Activated CD8-positive, alpha-beta T cell treated with anti-CD3 and anti-CD28 coated beads for 36 hours (primary cell): ENCODE measurements at regions of chr2 and their contacts with region 1.

Region 1: DNA sequence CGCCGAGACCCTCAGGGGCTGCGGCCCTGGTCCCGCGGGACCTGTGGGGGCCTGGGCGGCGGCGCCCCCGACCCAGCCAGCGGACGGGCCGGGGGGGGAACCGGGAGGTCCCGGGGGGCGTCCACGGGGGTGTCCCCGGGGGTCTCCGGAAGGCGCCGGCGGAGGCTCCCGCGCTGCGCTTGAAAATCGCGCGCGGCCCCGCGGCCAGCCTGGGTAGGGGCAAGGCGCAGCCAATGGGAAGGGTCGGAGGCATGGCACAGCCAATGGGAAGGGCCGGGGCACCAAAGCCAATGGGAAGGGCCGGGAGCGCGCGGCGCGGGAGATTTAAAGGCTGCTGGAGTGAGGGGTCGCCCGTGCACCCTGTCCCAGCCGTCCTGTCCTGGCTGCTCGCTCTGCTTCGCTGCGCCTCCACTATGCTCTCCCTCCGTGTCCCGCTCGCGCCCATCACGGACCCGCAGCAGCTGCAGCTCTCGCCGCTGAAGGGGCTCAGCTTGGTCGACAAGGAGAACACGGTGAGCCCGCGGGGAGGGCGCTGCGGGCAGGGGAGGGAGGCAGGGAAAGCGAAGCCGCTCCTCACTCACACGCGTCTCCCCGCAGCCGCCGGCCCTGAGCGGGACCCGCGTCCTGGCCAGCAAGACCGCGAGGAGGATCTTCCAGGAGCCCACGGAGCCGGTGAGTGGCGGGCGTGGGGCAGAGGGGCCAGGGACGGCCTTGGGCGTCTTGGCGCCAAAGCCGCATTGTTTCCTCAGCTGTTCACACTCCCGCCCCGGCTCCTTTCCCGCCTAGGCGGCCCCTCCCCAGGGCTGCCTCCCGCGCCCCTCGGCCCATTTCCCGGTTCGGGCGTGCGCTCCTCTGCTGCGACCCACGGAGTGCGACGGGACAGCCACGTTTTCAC is at the start of gene RRM2:
- DNase-seq: peak; percentile 98
- ATAC-seq: peak; percentile 80
- H3K4me3 Mint-ChIP-seq: peak within 1 kb of the TSS; percentile 94
- H3K27ac Mint-ChIP-seq: peak within 1 kb of the TSS; percentile 98
- H3K4me1 Mint-ChIP-seq: peaks cover 37% of the 10 kb centered on the region
- H3K27me3 Mint-ChIP-seq: peaks cover 2% of the 10 kb centered on the region
- CTCF ChIP-seq: no peak
- total RNA-seq, gene RRM2: 368 to 396 TPM

Region 2: GRCh38 chr2:9967053-9967775 is 155.4 kb before region 1 on chr2:
- CTCF ChIA-PET with region 1: no interaction called
- POLR2A ChIA-PET with region 1: no interaction called
- intact Hi-C with region 1: no loop called
- DNase-seq: no peak
- ATAC-seq: no peak
- H3K4me3 Mint-ChIP-seq: no peak overlapping the region
- H3K27ac Mint-ChIP-seq: no peak overlapping the region
- H3K4me1 Mint-ChIP-seq: peaks cover 6% of the 10 kb centered on the region
- H3K27me3 Mint-ChIP-seq: no peaks in the 10 kb centered on the region
- CTCF ChIP-seq: no peak

Region 3: DNA sequence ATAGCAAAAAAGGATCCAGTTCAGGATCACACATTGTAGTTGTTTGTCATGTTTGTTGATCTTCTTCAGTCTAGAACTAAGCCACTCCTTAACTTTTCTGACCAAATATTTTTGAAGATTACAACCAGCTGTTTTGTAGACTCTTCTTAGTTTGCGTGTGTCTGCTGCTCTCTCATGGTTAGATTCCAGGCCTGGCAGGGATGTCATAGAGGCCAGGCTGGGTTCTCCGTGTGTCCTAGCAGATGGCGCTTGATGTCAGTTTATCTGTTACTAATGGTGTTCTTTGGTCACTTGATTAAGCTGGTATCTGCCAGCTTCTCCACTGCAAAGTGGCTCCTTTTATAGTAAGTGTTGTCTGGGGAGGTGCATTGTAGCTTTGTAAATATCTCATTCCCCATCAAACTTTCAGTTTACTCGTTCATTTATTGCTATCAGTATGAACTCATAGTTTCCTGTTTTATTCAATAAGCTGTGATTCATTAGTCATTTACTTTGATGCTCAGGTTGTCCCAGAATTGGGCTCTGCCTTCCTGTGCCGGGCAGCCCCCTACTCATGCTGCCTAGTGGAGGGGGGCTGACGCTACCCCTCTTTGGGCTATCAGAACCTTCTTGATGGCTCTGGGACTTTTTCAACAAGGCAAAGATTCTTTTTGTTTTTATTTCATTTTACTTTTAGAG is 129.0 kb before region 1 on chr2:
- CTCF ChIA-PET with region 1: no interaction called
- POLR2A ChIA-PET with region 1: no interaction called
- intact Hi-C with region 1: no loop called
- DNase-seq: no peak
- ATAC-seq: no peak
- H3K4me3 Mint-ChIP-seq: no peak overlapping the region
- H3K27ac Mint-ChIP-seq: no peak overlapping the region
- H3K4me1 Mint-ChIP-seq: peaks cover 2% of the 10 kb centered on the region
- H3K27me3 Mint-ChIP-seq: peaks cover 1% of the 10 kb centered on the region
- CTCF ChIP-seq: no peak

Region 4: DNA sequence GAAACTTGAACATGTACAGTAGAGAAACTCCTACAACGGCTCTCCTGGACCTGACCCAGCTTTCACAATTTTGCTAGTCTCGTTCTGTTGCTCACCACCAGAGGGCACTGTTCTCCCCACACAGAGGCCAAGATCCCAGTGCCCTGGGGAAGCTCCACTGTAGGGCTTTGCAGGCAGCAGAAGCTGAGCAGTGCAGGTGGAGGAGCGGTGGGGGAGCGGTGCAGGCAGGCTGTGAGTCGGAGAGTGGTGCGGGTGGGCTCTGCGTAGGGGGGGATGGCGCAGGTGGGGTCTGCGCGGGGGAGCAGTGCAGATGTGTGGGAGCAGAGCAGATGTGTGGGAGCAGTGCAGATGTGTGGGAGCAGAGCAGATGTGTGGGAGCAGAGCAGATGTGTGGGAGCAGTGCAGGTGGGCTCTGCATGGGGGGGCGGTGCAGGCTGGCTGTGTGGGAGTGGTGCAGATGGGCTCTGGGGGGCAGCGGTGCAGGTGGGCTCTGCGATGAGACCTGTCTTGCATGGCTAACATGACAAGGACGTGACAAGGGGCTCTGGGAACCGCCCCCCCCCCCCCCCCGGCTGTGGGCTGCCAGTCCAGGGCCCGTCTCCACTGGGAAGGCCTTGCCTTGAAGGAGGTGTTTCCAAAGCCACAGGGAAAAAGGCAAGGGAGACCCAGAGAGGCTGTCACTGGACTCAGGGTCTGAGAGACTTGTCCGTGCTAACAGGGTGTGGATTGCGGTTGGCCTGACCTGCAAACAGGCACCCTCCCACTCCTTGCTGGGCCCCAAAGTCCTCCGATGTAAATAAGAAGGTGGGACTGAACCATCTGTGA is 49.8 kb before region 1 on chr2:
- CTCF ChIA-PET with region 1: interaction called, 34 read pairs
- POLR2A ChIA-PET with region 1: interaction called, 3 read pairs
- intact Hi-C with region 1: no loop called
- DNase-seq: peak; percentile 86
- ATAC-seq: peak; percentile 97
- H3K4me3 Mint-ChIP-seq: no peak overlapping the region
- H3K27ac Mint-ChIP-seq: no peak overlapping the region
- H3K4me1 Mint-ChIP-seq: peaks cover 8% of the 10 kb centered on the region
- H3K27me3 Mint-ChIP-seq: peaks cover 39% of the 10 kb centered on the region
- CTCF ChIP-seq: peak; percentile 86

Region 5: DNA sequence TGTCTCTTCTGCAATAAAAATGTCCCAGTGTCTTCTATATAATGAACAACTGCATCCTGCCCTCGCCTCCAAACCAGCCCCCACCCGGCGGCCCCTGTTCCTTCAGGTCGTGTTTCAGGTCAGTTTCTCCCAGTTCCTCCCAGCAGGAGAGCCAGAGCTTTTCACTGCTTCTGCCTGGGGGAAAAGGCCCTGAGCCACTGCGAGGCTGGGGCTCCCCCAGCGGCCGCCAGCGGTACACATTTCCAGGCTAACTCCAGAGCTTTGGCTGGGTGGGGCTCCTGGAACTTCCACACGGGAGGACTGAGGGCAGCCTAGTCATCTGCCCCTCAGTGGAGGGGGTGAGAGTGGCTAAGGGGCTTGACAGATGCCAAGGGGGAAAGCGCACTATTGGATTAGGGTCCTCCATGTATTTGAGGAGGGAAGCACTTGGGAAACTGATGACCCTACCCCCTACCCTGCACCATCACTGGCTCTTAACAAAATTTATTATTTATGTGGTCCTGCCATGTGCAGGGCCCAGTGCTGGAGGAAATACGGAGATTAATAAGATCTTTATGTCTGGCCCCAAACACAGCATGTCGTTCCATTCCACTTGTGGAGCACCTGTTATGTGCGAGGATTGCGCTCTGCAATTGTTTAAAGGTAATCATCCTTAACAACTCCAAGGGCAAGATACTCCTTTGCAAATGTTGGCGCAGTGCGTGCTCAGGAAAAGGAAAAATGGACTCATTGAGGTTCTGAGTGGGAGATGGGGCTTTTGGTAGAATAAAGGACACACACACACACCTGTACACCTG is 25.1 kb before region 1 on chr2:
- CTCF ChIA-PET with region 1: interaction called, 25 read pairs
- POLR2A ChIA-PET with region 1: interaction called, 3 read pairs
- intact Hi-C with region 1: no loop called
- DNase-seq: peak; percentile 48
- ATAC-seq: peak; percentile 88
- H3K4me3 Mint-ChIP-seq: no peak overlapping the region
- H3K27ac Mint-ChIP-seq: no peak overlapping the region
- H3K4me1 Mint-ChIP-seq: no peaks in the 10 kb centered on the region
- H3K27me3 Mint-ChIP-seq: peaks cover 17% of the 10 kb centered on the region
- CTCF ChIP-seq: peak; percentile 91

Region 6: GRCh38 chr2:10141736-10142642 is 19.4 kb after region 1 on chr2:
- CTCF ChIA-PET with region 1: interaction called, 3 read pairs
- POLR2A ChIA-PET with region 1: interaction called, 67 read pairs
- intact Hi-C with region 1: no loop called
- DNase-seq: peak; percentile 45
- ATAC-seq: peak; percentile 52
- H3K4me3 Mint-ChIP-seq: no peak overlapping the region
- H3K27ac Mint-ChIP-seq: no peak overlapping the region
- H3K4me1 Mint-ChIP-seq: peaks cover 22% of the 10 kb centered on the region
- H3K27me3 Mint-ChIP-seq: no peaks in the 10 kb centered on the region
- CTCF ChIP-seq: peak; percentile 38

Region 7: DNA sequence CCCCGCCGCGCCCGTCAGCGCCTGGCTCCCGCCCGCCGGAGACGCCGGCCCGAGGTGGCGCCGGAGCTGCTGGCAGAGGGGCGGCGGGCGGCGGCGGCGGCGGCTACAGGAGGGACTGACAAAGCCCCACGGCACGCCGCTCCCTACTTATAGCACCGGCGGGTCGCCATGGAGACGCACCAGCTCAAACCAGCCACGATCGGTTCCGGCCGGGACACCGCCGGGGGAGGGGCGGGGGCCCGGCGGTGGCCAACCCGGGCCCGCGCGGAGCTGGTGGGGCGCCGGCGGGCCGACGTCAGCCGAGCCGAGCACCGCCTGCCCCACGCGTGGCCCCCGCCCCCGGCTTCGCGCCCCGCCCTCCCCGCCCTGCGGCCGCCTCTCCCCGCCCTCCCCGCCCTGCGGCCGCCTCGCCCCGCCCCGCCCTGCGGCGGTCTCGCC is 325.6 kb after region 1 on chr2 and contains the start of gene ODC1:
- CTCF ChIA-PET with region 1: interaction called, 6 read pairs
- POLR2A ChIA-PET with region 1: interaction called, 32 read pairs
- intact Hi-C with region 1: loop called (anchors 5 kb)
- DNase-seq: peak; percentile 95
- ATAC-seq: peak; percentile 76
- H3K4me3 Mint-ChIP-seq: peak within 1 kb of the TSS; percentile 81
- H3K27ac Mint-ChIP-seq: peak within 1 kb of the TSS; percentile 94
- H3K4me1 Mint-ChIP-seq: peaks cover 47% of the 10 kb centered on the region
- H3K27me3 Mint-ChIP-seq: no peaks in the 10 kb centered on the region
- CTCF ChIP-seq: no peak
- total RNA-seq, gene ODC1: 180 to 181 TPM